GM13976 (cell line): ENCODE measurements at regions of chr18 and their contacts with region 1.

Region 1: DNA sequence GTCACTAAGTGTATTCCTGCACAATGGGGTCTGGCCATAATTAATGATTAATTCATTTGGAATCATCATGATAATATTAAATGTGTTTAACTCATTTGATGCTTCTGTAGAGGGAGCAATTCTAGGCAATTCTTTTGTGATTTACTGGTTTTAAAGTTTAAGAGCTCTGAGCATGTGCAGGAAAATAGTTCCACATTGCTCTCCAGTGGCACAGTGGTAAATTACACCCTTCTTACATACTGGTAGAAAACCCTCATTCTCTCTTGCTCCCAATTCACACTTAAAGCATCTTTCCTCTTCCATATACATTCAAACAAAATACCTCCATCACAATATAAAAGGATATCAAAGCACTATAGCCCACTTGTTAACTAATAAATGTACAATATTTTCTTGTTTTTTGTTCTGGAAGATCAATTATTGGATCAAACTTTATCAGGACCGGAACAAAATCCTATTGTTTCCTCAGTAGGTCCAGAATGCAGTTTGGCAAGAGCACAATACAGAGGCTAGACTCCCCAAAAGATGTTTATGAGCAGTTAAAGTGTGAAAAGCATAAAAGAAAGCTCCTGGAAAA is 844.3 kb downstream of the MBD2 start:
- DNase-seq: peak; percentile 30
- CTCF ChIP-seq: peak; percentile 22

Region 2: GRCh38 chr18:51630706-51631105 is 1749.4 kb before region 1 on chr18:
- in situ Hi-C with region 1: loop called (anchors 25 kb)
- DNase-seq: no peak
- CTCF ChIP-seq: no peak

Region 3: GRCh38 chr18:53944721-53945120 is 564.6 kb after region 1 on chr18:
- in situ Hi-C with region 1: no loop called
- DNase-seq: no peak
- CTCF ChIP-seq: no peak